ENCODE measurements at regions of chr19 and their contacts with region 1.

Region 1: GRCh38 chr19:37906869-37907734 is at the start of gene SIPA1L3:
- DNase-seq: peak; percentile 79 to 95 (median 93)
- ATAC-seq: peak; percentile 98
- H3K4me3 ChIP-seq: peak within 1 kb of the TSS; percentile 74 to 98
- H3K4me3 Mint-ChIP-seq: peak within 1 kb of the TSS; percentile 92
- H3K27ac ChIP-seq: peak within 1 kb of the TSS; percentile 64 to 68
- H3K27ac Mint-ChIP-seq: peak within 1 kb of the TSS; percentile 90
- H3K4me1 ChIP-seq: peaks cover 20% of the 10 kb centered on the region
- H3K4me1 Mint-ChIP-seq: peaks cover 31% of the 10 kb centered on the region
- H3K27me3 ChIP-seq: no peaks in the 10 kb centered on the region
- H3K27me3 Mint-ChIP-seq: no peaks in the 10 kb centered on the region
- CTCF ChIP-seq: no peak
- total RNA-seq, gene SIPA1L3: 13.5 to 14.6 TPM

Region 2: DNA sequence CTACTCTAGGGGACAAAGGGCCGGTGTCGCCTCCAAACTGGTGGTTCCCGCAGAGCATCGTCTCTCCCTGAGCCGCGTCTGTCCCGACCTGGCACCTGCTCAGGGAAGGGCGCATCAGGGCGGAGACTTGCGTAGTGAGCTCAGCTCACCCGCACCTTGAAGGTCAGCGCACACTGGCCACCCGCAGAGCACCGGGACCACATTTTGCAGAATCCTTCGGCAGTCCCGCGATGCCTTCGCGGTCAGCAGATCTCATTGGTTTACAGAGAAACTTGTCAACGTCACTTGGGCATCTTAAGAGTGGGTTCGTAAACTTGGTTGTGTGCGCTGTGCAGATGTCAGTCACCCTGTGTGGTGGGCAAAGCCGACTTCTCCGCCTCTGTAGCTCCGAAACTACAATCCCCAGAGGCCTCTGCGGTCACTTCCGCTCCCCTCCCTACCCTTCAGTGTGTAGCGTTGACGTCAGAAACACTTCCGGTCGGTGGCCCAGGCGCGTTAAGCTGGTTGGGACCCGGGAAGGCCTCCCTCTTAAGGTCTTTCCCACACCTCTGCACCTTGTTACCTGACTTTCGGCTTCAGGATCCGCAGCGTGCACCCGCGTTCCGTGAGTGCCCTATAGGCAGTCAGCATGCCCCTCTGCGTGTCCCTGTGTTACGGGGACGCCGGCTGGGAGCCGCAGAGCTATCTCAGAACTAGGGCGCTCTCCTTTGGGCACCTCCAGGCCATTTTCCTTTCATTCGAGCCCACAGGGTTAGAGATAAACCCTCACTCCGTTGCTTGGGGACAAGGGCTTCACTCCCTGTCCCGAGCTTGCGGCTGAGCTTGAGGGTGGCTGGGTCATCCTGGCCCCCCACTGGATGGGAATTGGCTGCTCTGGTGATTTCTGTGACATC is 572.7 kb before region 1 on chr19:
- CTCF ChIA-PET with region 1: no interaction called
- POLR2A ChIA-PET with region 1: no interaction called
- intact Hi-C with region 1: loop called (anchors 1 kb)
- DNase-seq: peak; percentile 75 to 96 (median 87)
- ATAC-seq: peak; percentile 97
- H3K4me3 ChIP-seq: peak overlapping the region; percentile 46 to 74
- H3K4me3 Mint-ChIP-seq: peak overlapping the region; percentile 96
- H3K27ac ChIP-seq: peak overlapping the region; percentile 46 to 87
- H3K27ac Mint-ChIP-seq: peak overlapping the region; percentile 95
- H3K4me1 ChIP-seq: peaks cover 10% of the 10 kb centered on the region
- H3K4me1 Mint-ChIP-seq: peaks cover 47% of the 10 kb centered on the region
- H3K27me3 ChIP-seq: no peaks in the 10 kb centered on the region
- H3K27me3 Mint-ChIP-seq: no peaks in the 10 kb centered on the region
- CTCF ChIP-seq: no peak

Region 3: GRCh38 chr19:37779127-37780005 is 127.7 kb before region 1 on chr19 and contains the start of gene ZNF573:
- CTCF ChIA-PET with region 1: no interaction called
- POLR2A ChIA-PET with region 1: interaction called, 5 read pairs
- intact Hi-C with region 1: loop called (anchors 1 kb)
- DNase-seq: peak; percentile 66 to 99 (median 82)
- ATAC-seq: peak; percentile 84
- H3K4me3 ChIP-seq: peak within 1 kb of the TSS; percentile 67 to 70
- H3K4me3 Mint-ChIP-seq: peak within 1 kb of the TSS; percentile 97
- H3K27ac ChIP-seq: peak within 1 kb of the TSS; percentile 96 to 98
- H3K27ac Mint-ChIP-seq: peak within 1 kb of the TSS; percentile 91
- H3K4me1 ChIP-seq: peaks cover 12% of the 10 kb centered on the region
- H3K4me1 Mint-ChIP-seq: peaks cover 46% of the 10 kb centered on the region
- H3K27me3 ChIP-seq: no peaks in the 10 kb centered on the region
- H3K27me3 Mint-ChIP-seq: no peaks in the 10 kb centered on the region
- CTCF ChIP-seq: no peak
- total RNA-seq, gene ZNF573: 3.9 to 5.8 TPM

Region 4: GRCh38 chr19:38142176-38143035 is 235.3 kb after region 1 on chr19:
- CTCF ChIA-PET with region 1: interaction called, 5 read pairs
- POLR2A ChIA-PET with region 1: no interaction called
- intact Hi-C with region 1: loop called in 1 of 2 experiments (anchors 1 kb)
- DNase-seq: peak in 6 of 9 experiments; percentile 7 to 51 (median 38)
- ATAC-seq: no peak
- H3K4me3 ChIP-seq: no peak overlapping the region
- H3K4me3 Mint-ChIP-seq: no peak overlapping the region
- H3K27ac ChIP-seq: no peak overlapping the region
- H3K27ac Mint-ChIP-seq: no peak overlapping the region
- H3K4me1 ChIP-seq: no peaks in the 10 kb centered on the region
- H3K4me1 Mint-ChIP-seq: no peaks in the 10 kb centered on the region
- H3K27me3 ChIP-seq: no peaks in the 10 kb centered on the region
- H3K27me3 Mint-ChIP-seq: no peaks in the 10 kb centered on the region
- CTCF ChIP-seq: no peak

Region 5: DNA sequence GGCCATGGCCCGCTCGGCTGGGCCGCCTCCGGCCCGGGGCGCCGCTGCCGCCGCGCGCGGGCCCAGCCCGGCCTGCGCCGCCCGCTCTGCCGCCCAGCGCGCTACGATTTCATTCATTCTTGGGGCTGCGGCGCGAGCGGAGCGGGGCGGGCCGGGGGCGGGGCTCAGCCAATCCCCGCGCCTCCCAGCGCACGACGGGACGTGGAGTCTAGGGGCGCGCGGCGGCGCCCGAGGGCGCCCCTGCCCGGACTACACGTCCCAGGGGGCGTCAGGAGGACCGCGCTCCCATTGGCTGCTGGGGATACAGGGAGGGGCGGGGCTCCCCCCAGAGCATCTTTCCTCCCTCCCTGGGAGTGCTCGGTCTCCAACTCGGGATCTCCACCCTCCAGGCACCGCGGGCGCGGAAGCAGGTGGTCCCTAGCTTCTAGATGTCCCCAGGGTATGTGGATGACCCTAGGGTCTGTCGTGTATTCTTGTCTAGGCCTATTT is 322.5 kb after region 1 on chr19:
- CTCF ChIA-PET with region 1: interaction called, 4 read pairs
- POLR2A ChIA-PET with region 1: no interaction called
- intact Hi-C with region 1: loop called (anchors 1 to 5 kb)
- DNase-seq: peak; percentile 18 to 80 (median 53)
- ATAC-seq: peak; percentile 95
- H3K4me3 ChIP-seq: no peak overlapping the region
- H3K4me3 Mint-ChIP-seq: peak overlapping the region; percentile 42
- H3K27ac ChIP-seq: no peak overlapping the region
- H3K27ac Mint-ChIP-seq: no peak overlapping the region
- H3K4me1 ChIP-seq: peaks cover 9% of the 10 kb centered on the region
- H3K4me1 Mint-ChIP-seq: peaks cover 11% of the 10 kb centered on the region
- H3K27me3 ChIP-seq: peaks cover 29 to 45% of the 10 kb centered on the region in 2 experiments
- H3K27me3 Mint-ChIP-seq: peaks cover 47% of the 10 kb centered on the region
- CTCF ChIP-seq: no peak

Region 6: DNA sequence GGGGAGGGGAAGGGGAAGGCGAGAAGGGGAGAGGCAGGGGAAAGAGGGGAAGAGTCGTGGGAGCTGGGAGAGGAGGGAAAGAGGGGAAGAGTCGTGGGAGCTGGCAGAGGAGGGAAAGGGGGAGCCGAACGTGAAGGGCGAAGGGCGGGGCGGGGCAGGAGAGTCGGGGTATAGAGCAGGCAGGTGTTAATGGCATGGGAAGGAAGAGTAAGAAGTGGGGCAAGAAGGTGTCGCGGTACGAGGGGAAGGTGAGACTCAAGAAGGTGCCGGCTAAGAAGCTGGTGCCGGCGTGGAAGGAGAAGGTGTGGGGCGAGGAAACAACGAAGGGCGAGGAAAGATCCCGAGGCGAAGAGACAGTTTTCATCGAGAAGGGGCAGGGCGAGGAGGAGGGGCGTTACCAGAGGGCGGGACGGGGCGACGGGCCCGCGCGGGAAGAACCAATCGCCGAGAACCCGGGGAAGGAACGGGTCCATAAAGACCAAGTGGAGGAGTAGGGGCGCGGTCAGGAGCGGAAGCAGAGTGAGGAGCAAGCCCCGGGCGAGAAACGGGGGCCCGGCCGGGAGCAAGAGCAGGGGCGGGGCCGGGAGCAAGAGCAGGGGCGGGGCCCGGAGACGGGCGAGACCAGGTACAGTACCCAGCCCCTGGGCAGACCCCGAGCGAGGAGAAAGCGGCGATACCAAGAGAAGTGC is 429.0 kb after region 1 on chr19:
- CTCF ChIA-PET with region 1: interaction called, 19 read pairs
- POLR2A ChIA-PET with region 1: interaction called, 8 read pairs
- intact Hi-C with region 1: loop called (anchors 1 kb)
- DNase-seq: peak; percentile 85 to 96 (median 95)
- ATAC-seq: peak; percentile 66
- H3K4me3 ChIP-seq: peak overlapping the region; percentile 85 to 94
- H3K4me3 Mint-ChIP-seq: peak overlapping the region; percentile 89
- H3K27ac ChIP-seq: peak overlapping the region; percentile 84 to 95
- H3K27ac Mint-ChIP-seq: peak overlapping the region; percentile 97
- H3K4me1 ChIP-seq: peaks cover 10% of the 10 kb centered on the region
- H3K4me1 Mint-ChIP-seq: peaks cover 17% of the 10 kb centered on the region
- H3K27me3 ChIP-seq: no peaks in the 10 kb centered on the region
- H3K27me3 Mint-ChIP-seq: no peaks in the 10 kb centered on the region
- CTCF ChIP-seq: no peak

Region 7: GRCh38 chr19:38634757-38635482 is 727.8 kb after region 1 on chr19:
- CTCF ChIA-PET with region 1: no interaction called
- POLR2A ChIA-PET with region 1: no interaction called
- intact Hi-C with region 1: loop called in 1 of 2 experiments (anchors 5 kb)
- DNase-seq: peak; percentile 49 to 84 (median 73)
- ATAC-seq: peak; percentile 30
- H3K4me3 ChIP-seq: no peak overlapping the region
- H3K4me3 Mint-ChIP-seq: peak overlapping the region; percentile 47
- H3K27ac ChIP-seq: peak overlapping the region in 1 of 2 experiments; percentile 63
- H3K27ac Mint-ChIP-seq: peak overlapping the region; percentile 46
- H3K4me1 ChIP-seq: peaks cover 26% of the 10 kb centered on the region
- H3K4me1 Mint-ChIP-seq: peaks cover 24% of the 10 kb centered on the region
- H3K27me3 ChIP-seq: no peaks in the 10 kb centered on the region
- H3K27me3 Mint-ChIP-seq: no peaks in the 10 kb centered on the region
- CTCF ChIP-seq: peak; percentile 88

Measured in CD8-positive, alpha-beta T cell (primary cell).